ENCODE measurements at regions of chr12 and their contacts with region 1.

Region 1: DNA sequence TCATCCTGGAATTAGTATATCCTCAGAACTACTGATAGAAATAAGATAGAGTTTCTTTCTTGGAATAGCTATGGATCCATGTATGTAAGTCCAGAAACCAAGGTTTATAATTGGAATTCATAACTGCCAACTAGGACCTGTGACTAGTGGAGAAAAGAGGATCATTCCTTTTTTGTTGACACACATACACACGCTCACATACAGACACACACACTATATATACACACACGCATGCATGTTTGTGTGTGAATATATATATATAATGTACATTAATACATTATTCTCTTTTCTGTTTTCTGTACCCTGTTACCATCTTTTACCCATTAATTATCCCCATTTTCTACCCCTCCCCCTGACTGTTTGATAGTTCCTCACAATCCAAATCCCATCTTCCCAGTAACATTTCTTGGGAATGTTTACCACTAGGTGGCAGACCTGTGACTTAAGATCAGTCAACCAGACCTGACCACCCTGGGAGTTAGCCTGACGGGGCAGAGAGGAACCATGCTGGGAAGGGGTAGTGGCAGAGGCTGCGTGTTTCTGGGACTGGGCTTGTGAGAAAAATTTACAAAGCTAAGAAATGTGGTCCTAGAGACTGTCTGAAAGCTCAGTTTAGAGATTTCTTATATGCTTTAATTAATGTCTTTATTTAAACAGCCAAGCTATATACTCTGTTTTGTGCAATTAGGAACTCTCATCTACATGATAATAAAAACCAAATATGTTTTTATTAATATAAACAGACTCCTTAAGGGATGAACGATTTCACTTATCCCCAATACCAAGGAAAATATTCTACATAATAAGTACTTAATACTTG is 308.0 kb downstream of the PPFIA2 start:
- DNase-seq: peak; percentile 14
- H3K4me3 ChIP-seq: no peak overlapping the region
- CTCF ChIP-seq: peak; percentile 61

Region 2: GRCh38 chr12:80954857-80955520 is 496.1 kb before region 1 on chr12:
- CTCF ChIA-PET with region 1: no interaction called
- POLR2A ChIA-PET with region 1: no interaction called
- DNase-seq: no peak
- H3K4me3 ChIP-seq: no peak overlapping the region
- CTCF ChIP-seq: no peak

Region 3: GRCh38 chr12:81440001-81440400 is 11.1 kb before region 1 on chr12:
- CTCF ChIA-PET with region 1: interaction called, 21 read pairs
- POLR2A ChIA-PET with region 1: no interaction called
- DNase-seq: no peak
- H3K4me3 ChIP-seq: no peak overlapping the region
- CTCF ChIP-seq: no peak

Region 4: DNA sequence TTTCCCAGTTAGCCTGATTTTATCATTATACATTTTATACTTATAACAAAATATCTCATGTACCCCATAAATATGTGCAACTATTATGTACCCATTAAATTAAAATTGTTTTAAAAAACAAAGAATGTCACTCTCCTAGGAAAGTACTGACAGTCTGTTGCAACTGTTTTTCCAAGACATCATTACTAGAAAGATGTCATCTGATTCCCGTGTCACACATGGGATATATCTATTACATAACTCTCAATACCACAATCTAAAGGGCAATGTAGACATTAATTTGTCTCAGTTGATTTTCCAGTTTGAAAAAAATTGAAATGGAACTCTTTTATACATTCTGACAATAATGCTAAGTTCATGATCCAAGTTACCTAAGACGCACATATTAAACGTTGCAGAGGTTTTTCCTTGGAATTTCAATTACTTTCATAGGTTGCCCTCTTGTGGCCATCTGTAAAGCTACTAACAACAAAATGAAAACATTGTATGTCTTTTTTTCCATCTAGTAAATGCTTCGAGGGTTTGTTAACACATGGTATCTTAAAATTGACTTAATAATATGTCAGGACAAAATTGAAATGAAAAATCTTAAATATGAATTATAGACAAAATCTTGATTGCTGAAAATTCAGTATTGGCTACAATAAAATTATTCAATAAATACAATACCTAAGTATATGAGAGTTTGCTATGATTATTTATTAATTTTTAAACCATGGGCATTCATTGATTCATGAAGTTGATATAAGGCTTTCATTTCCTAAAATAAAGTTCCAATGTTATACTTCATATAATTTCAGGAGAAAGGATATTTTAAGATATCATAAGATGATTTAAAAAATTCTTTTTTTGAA is 176.4 kb after region 1 on chr12:
- CTCF ChIA-PET with region 1: interaction called, 26 read pairs
- POLR2A ChIA-PET with region 1: no interaction called
- DNase-seq: no peak
- H3K4me3 ChIP-seq: no peak overlapping the region
- CTCF ChIP-seq: peak; percentile 41

Region 5: DNA sequence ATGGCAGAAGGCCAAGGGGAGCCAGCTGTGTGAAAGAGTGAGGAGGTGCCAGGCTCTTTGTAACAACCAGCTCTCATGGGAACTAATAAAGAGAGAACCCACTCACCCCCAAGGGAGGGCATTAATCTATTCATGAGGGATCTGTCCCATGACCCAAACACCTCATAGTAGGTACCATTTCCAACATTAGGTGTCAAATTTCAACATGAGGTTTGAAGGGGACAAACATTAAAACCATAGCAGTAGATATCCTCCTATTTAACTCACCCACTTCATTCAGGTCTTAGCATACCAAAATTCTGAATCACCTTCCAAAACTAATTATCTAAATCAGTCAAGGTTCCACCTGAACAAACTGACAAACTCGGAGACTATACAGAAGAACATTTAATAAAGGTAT is 232.8 kb after region 1 on chr12:
- CTCF ChIA-PET with region 1: no interaction called
- POLR2A ChIA-PET with region 1: no interaction called
- DNase-seq: no peak
- H3K4me3 ChIP-seq: no peak overlapping the region
- CTCF ChIP-seq: no peak

Measured in AG04449 (cell line).